Activated CD8-positive, alpha-beta T cell treated with anti-CD3 and anti-CD28 coated beads for 36 hours (primary cell): ENCODE measurements at regions of chr10 and their contacts with region 1.

Region 1: GRCh38 chr10:7484456-7485243 is 73.8 kb upstream of the SFMBT2 start:
- DNase-seq: peak; percentile 88
- ATAC-seq: peak; percentile 89
- H3K4me3 Mint-ChIP-seq: peak overlapping the region; percentile 66
- H3K27ac Mint-ChIP-seq: peak overlapping the region; percentile 95
- H3K4me1 Mint-ChIP-seq: peaks cover 79% of the 10 kb centered on the region
- H3K27me3 Mint-ChIP-seq: no peaks in the 10 kb centered on the region
- CTCF ChIP-seq: no peak

Region 2: GRCh38 chr10:7373039-7373438 is 111.6 kb before region 1 on chr10:
- CTCF ChIA-PET with region 1: no interaction called
- POLR2A ChIA-PET with region 1: no interaction called
- intact Hi-C with region 1: no loop called
- DNase-seq: no peak
- ATAC-seq: no peak
- H3K4me3 Mint-ChIP-seq: no peak overlapping the region
- H3K27ac Mint-ChIP-seq: no peak overlapping the region
- H3K4me1 Mint-ChIP-seq: peaks cover 4% of the 10 kb centered on the region
- H3K27me3 Mint-ChIP-seq: no peaks in the 10 kb centered on the region
- CTCF ChIP-seq: no peak

Region 3: GRCh38 chr10:7428673-7429350 is 55.8 kb before region 1 on chr10:
- CTCF ChIA-PET with region 1: no interaction called
- POLR2A ChIA-PET with region 1: no interaction called
- intact Hi-C with region 1: no loop called
- DNase-seq: no peak
- ATAC-seq: no peak
- H3K4me3 Mint-ChIP-seq: no peak overlapping the region
- H3K27ac Mint-ChIP-seq: no peak overlapping the region
- H3K4me1 Mint-ChIP-seq: peaks cover 19% of the 10 kb centered on the region
- H3K27me3 Mint-ChIP-seq: no peaks in the 10 kb centered on the region
- CTCF ChIP-seq: no peak

Region 4: GRCh38 chr10:7501157-7501556 is 16.5 kb after region 1 on chr10:
- CTCF ChIA-PET with region 1: interaction called, 4 read pairs
- POLR2A ChIA-PET with region 1: interaction called, 10 read pairs
- intact Hi-C with region 1: no loop called
- DNase-seq: peak; percentile 43
- ATAC-seq: peak; percentile 74
- H3K4me3 Mint-ChIP-seq: no peak overlapping the region
- H3K27ac Mint-ChIP-seq: no peak overlapping the region
- H3K4me1 Mint-ChIP-seq: peaks cover 13% of the 10 kb centered on the region
- H3K27me3 Mint-ChIP-seq: no peaks in the 10 kb centered on the region
- CTCF ChIP-seq: no peak